ENCODE measurements at regions of chr5 and their contacts with region 1.

Region 1: DNA sequence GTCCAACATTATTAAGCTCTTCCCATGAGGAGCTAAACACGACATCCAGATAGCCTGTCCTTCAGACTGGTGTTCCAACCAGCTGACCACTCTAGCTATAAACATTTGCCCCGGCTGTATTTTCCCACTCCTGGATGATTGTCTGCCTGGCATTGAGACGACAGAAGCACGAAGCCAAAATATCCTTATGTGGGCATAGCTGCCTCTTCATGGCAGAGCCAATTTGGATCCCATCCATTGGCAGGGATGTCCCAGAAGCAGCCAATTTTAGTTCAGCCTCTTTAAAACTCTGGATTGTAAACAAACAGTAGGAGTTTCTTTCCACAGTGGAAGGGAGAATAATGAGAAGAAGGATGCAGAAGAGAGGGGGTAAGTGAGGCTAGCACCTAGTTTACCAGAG is 507.6 kb downstream of the CETN3 start:
- DNase-seq: peak; percentile 57
- H3K4me3 ChIP-seq: no peak overlapping the region
- H3K27ac ChIP-seq: peak overlapping the region; percentile 42 to 43
- H3K4me1 ChIP-seq: no peaks in the 10 kb centered on the region
- H3K27me3 ChIP-seq: no peaks in the 10 kb centered on the region
- CTCF ChIP-seq: no peak
- POLR2A ChIP-seq: no peak

Region 2: DNA sequence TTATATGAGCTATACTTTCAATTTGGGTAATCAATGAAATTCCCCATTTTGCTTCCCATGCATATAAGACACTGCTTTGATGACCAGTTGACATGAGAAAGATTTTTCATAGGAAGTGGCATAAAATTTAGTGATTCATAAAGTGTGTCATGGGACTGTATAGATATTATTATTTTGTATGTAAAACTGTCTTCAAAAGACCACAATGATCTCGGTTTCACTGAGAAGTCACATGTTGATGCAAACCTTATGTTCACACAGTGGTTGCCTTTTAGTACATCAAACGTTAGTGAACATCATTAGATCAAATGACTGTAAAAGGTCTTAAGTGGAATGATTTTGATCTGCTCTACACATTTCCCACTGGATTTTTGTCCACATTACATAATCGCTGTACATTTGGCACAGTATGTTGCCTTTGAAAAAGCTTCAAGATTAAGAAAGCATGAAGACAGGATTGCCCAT is 669.8 kb before region 1 on chr5:
- intact Hi-C with region 1: no loop called
- DNase-seq: no peak
- H3K4me3 ChIP-seq: no peak overlapping the region
- H3K27ac ChIP-seq: no peak overlapping the region
- H3K4me1 ChIP-seq: no peaks in the 10 kb centered on the region
- H3K27me3 ChIP-seq: no peaks in the 10 kb centered on the region
- CTCF ChIP-seq: no peak
- POLR2A ChIP-seq: no peak

Region 3: GRCh38 chr5:90131383-90132133 is 229.6 kb after region 1 on chr5:
- intact Hi-C with region 1: loop called (anchors 2 kb)
- DNase-seq: no peak
- H3K4me3 ChIP-seq: no peak overlapping the region
- H3K27ac ChIP-seq: peak overlapping the region in 1 of 2 donors; percentile 19
- H3K4me1 ChIP-seq: no peaks in the 10 kb centered on the region
- H3K27me3 ChIP-seq: no peaks in the 10 kb centered on the region
- CTCF ChIP-seq: no peak
- POLR2A ChIP-seq: no peak

Region 4: GRCh38 chr5:90274216-90274615 is 372.2 kb after region 1 on chr5:
- intact Hi-C with region 1: no loop called
- DNase-seq: no peak
- H3K4me3 ChIP-seq: no peak overlapping the region
- H3K27ac ChIP-seq: no peak overlapping the region
- H3K4me1 ChIP-seq: no peaks in the 10 kb centered on the region
- H3K27me3 ChIP-seq: no peaks in the 10 kb centered on the region
- CTCF ChIP-seq: no peak
- POLR2A ChIP-seq: no peak